Psoas muscle (tissue), 8 donors: ENCODE measurements at regions of chr16 and their contacts with region 1.

Region 1: GRCh38 chr16:30621765-30622164 is 11.6 kb upstream of the ZNF689 start:
- DNase-seq: no peak
- ATAC-seq: no peak
- H3K4me3 ChIP-seq: no peak overlapping the region
- H3K27ac ChIP-seq: no peak overlapping the region
- H3K4me1 ChIP-seq: no peaks in the 10 kb centered on the region
- H3K27me3 ChIP-seq: no peaks in the 10 kb centered on the region
- CTCF ChIP-seq: no peak

Region 2: GRCh38 chr16:30541502-30542329 is 80.0 kb before region 1 on chr16:
- intact Hi-C with region 1: no loop called
- DNase-seq: no peak
- ATAC-seq: peak in 2 of 4 donors; percentile 37 to 44
- H3K4me3 ChIP-seq: no peak overlapping the region
- H3K27ac ChIP-seq: peak overlapping the region; percentile 41
- H3K4me1 ChIP-seq: no peaks in the 10 kb centered on the region
- H3K27me3 ChIP-seq: no peaks in the 10 kb centered on the region
- CTCF ChIP-seq: no peak

Region 3: DNA sequence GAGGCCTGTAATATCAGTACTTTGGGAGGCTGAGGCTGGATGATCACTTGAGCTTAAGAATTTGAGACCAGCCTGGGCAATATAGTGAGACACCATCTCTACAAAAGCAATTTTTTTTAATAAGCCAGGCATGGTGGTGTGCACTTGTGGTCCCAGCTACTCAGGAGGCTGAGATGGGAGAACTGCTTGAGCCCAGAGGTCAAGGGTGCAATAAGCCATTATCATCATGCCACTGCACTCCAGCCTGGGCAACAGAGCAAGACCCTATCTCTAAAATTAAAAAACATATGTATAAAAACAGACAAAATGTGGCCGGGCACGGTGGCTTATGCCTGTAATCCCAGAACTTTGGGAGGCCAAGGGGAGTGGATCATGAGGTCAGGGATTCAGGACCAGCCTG is 33.1 kb before region 1 on chr16:
- intact Hi-C with region 1: no loop called
- DNase-seq: no peak
- ATAC-seq: no peak
- H3K4me3 ChIP-seq: no peak overlapping the region
- H3K27ac ChIP-seq: no peak overlapping the region
- H3K4me1 ChIP-seq: peaks cover 11% of the 10 kb centered on the region
- H3K27me3 ChIP-seq: no peaks in the 10 kb centered on the region
- CTCF ChIP-seq: no peak

Region 4: DNA sequence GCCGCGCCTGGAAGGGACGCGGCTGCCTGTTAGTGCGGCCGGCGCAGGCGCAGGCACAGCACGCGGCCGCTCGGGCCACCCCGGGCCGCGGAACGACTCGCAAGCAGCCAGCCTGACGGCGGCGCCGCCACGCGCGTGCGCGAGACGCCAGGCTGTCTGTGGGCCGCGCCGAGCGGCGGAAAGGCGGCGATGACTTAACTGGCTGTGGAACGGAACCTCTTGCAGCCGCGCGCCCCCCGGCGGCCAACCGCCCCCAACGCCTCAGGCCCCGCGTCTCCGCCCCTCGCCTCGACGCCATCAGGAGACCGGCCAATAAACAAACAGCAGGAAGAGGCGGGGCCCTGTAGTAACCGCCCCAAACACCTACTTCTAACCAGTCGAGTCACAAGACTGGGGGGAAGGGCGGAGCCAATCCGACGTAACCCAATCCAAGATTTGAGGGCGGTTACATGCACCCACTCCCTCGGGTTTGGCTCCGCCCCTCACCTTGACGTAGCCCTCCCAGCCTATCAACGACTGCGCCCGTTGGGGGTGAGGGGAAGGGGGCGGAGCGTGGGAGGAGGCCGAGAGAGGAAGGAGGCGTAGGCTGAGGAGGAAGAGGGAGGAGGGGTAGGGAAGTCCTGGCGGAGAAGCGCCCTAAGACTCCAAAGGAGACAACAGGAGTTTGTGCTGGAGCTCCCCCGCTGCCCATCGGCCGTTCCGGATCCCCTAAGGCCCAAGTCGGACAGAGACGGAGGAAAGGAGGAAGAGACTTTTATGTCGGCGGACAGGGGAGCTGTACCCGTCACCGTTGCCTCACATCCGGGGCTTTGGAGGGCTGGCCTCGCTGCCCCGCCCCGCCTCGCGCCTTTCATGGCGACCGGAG is 36.3 kb after region 1 on chr16 and contains the start of gene FBRS:
- intact Hi-C with region 1: no loop called
- DNase-seq: peak; percentile 100
- ATAC-seq: peak; percentile 86 to 88 (median 87)
- H3K4me3 ChIP-seq: peak within 1 kb of the TSS; percentile 93
- H3K27ac ChIP-seq: peak within 1 kb of the TSS; percentile 100
- H3K4me1 ChIP-seq: peaks cover 37% of the 10 kb centered on the region
- H3K27me3 ChIP-seq: no peaks in the 10 kb centered on the region
- CTCF ChIP-seq: peak; percentile 75
- total RNA-seq, gene FBRS: 31.2 to 58.5 (median 38.6) TPM

Region 5: DNA sequence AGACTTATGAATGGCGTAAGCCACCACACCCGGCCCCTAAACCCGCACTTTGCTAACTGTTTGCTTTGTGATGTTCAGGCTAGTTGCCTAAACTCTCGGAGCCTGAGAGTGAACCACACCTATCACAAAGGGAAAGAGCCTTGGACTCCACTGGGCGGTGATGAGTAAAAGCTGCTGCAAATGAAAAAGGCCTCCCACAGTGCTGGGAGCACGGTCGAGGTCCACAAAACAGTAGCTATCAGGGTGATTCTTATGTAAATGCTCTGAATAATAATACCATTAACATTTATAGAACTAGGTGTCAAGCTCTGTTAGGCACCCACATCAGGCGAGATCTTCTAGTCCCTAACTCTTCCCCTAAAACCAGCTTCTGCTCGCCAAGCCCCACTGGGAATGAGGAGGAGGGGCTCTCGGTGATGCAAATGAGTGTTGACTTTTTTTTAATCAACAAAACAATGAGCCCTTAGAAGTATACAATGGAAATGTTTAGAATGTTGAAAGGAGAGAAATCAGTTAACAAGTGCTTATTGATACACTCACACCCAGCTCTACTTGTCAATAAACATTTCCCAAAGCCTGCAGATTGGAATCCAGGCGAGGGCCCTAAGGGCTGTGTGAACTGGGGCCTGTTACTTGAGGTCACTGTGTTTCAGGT is 56.3 kb after region 1 on chr16:
- intact Hi-C with region 1: loop called in 1 of 2 experiments (anchors 2 kb)
- DNase-seq: no peak
- ATAC-seq: no peak
- H3K4me3 ChIP-seq: no peak overlapping the region
- H3K27ac ChIP-seq: no peak overlapping the region
- H3K4me1 ChIP-seq: no peaks in the 10 kb centered on the region
- H3K27me3 ChIP-seq: no peaks in the 10 kb centered on the region
- CTCF ChIP-seq: no peak